Motor neuron (in vitro differentiated cells): ENCODE measurements at regions of chr10 and their contacts with region 1.

Region 1: GRCh38 chr10:9209105-9209798 is 1154.8 kb downstream of the GATA3 start:
- ATAC-seq: peak in 6 of 8 experiments; percentile 25 to 71 (median 49)
- H3K4me3 ChIP-seq: no peak overlapping the region
- H3K27ac ChIP-seq: no peak overlapping the region
- H3K4me1 ChIP-seq: no peaks in the 10 kb centered on the region

Region 2: DNA sequence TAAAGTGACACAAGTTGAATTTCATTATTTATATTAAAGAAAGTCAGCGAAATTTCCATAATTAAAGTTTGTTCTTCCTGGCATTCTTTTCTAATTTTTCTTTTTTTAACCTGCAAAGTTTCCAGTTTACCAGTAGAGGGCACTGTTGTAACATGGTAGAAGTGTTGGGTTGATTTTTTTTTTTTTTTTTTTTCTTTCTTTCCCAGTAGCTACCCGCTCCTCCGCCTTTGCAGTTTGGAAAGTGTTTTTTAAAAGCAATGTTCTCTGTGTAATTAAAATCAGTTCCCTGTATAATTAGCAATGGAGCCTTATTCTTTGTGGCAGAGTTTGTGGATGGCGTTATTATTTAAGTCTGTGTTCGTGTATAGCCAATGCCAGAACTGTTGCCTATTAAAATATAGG is 1337.2 kb before region 1 on chr10:
- in situ Hi-C with region 1: loop called in 5 of 9 experiments (anchors 10 to 25 kb)
- ATAC-seq: no peak
- H3K4me3 ChIP-seq: peak overlapping the region in 1 of 5 donors; percentile 15
- H3K27ac ChIP-seq: no peak overlapping the region
- H3K4me1 ChIP-seq: no peaks in the 10 kb centered on the region

Region 3: GRCh38 chr10:8053446-8054290 is 1155.6 kb before region 1 on chr10:
- in situ Hi-C with region 1: loop called in 1 of 9 experiments (anchors 25 kb)
- ATAC-seq: peak; percentile 78 to 94 (median 91)
- H3K4me3 ChIP-seq: peak overlapping the region; percentile 33 to 48 (median 44)
- H3K27ac ChIP-seq: no peak overlapping the region
- H3K4me1 ChIP-seq: peaks cover 9 to 21% of the 10 kb centered on the region in 2 donors

Region 4: GRCh38 chr10:8365935-8366911 is 843.0 kb before region 1 on chr10:
- in situ Hi-C with region 1: no loop called
- ATAC-seq: peak in 2 of 8 experiments; percentile 14 to 81
- H3K4me3 ChIP-seq: no peak overlapping the region
- H3K27ac ChIP-seq: no peak overlapping the region
- H3K4me1 ChIP-seq: no peaks in the 10 kb centered on the region